ENCODE measurements at regions of chr15 and their contacts with region 1.

Region 1: GRCh38 chr15:30991255-30992072 is at the start of gene MTMR10:
- DNase-seq: peak; percentile 94
- H3K4me3 Mint-ChIP-seq: peak within 1 kb of the TSS; percentile 95
- H3K27ac Mint-ChIP-seq: peak within 1 kb of the TSS; percentile 94
- H3K4me1 Mint-ChIP-seq: peaks cover 22% of the 10 kb centered on the region
- H3K27me3 Mint-ChIP-seq: peaks cover 14% of the 10 kb centered on the region
- total RNA-seq, gene MTMR10: 11.3 and 12.3 TPM in 2 replicates

Region 2: GRCh38 chr15:30903497-30904201 is 87.8 kb before region 1 on chr15 and contains the start of gene FAN1:
- intact Hi-C with region 1: loop called (anchors 1 kb)
- DNase-seq: peak; percentile 93
- H3K4me3 Mint-ChIP-seq: peak within 1 kb of the TSS; percentile 89
- H3K27ac Mint-ChIP-seq: peak within 1 kb of the TSS; percentile 88
- H3K4me1 Mint-ChIP-seq: peaks cover 19% of the 10 kb centered on the region
- H3K27me3 Mint-ChIP-seq: no peaks in the 10 kb centered on the region
- total RNA-seq, gene FAN1: 29.4 and 31.2 TPM in 2 replicates

Region 3: DNA sequence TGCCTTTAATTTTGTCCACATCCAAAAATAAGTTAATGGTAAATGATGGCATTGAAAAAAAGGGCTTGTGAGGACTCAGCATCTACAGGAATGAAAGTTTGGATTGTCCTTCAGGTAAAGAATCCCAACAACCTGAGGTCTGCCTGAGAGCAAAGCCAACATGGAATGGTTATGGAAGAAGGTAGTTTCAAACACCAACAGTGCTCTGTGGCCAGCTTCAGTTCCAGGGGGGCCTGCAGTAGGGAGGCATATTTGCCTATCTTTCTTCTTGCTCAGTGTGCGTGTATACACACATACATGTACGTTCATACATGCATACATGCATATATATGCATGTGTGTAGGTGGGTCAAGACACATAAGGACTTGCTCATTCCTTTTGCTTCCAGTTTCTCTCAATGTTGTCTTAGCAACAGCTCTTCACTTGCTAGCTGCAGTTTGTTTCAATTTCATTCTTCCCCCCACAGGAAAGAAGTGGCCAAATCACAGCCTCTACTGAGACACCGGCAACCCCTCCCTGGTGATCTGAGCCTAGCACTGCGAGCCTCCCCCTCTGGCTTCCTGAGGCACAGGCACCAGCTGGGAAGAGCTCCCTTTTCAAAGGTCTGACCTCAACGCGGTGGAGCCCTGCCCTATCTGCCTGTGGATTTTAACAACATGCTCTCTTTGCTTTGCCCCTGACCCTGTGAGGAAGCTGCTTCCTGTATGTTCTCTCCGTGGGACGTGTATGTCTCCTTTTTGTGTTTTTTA is 481.3 kb after region 1 on chr15:
- intact Hi-C with region 1: loop called (anchors 5 kb)
- DNase-seq: peak; percentile 93
- H3K4me3 Mint-ChIP-seq: peak overlapping the region; percentile 73
- H3K27ac Mint-ChIP-seq: peak overlapping the region; percentile 90
- H3K4me1 Mint-ChIP-seq: peaks cover 37% of the 10 kb centered on the region
- H3K27me3 Mint-ChIP-seq: no peaks in the 10 kb centered on the region

Region 4: GRCh38 chr15:31870328-31871165 is 879.1 kb after region 1 on chr15:
- intact Hi-C with region 1: loop called (anchors 5 kb)
- DNase-seq: peak; percentile 96
- H3K4me3 Mint-ChIP-seq: peak within 1 kb of the TSS; percentile 87
- H3K27ac Mint-ChIP-seq: peak within 1 kb of the TSS; percentile 83
- H3K4me1 Mint-ChIP-seq: peaks cover 10% of the 10 kb centered on the region
- H3K27me3 Mint-ChIP-seq: peaks cover 42% of the 10 kb centered on the region

Measured in activated CD4-positive, alpha-beta T cell treated with anti-CD3 and anti-CD28 coated beads, Interleukin-2, amount 10 ng/mL, durations not matched to agents 24 days and 14 days (primary cell).